Endothelial cell of umbilical vein (primary cell): ENCODE measurements at regions of chr12 and their contacts with region 1.

Region 1: DNA sequence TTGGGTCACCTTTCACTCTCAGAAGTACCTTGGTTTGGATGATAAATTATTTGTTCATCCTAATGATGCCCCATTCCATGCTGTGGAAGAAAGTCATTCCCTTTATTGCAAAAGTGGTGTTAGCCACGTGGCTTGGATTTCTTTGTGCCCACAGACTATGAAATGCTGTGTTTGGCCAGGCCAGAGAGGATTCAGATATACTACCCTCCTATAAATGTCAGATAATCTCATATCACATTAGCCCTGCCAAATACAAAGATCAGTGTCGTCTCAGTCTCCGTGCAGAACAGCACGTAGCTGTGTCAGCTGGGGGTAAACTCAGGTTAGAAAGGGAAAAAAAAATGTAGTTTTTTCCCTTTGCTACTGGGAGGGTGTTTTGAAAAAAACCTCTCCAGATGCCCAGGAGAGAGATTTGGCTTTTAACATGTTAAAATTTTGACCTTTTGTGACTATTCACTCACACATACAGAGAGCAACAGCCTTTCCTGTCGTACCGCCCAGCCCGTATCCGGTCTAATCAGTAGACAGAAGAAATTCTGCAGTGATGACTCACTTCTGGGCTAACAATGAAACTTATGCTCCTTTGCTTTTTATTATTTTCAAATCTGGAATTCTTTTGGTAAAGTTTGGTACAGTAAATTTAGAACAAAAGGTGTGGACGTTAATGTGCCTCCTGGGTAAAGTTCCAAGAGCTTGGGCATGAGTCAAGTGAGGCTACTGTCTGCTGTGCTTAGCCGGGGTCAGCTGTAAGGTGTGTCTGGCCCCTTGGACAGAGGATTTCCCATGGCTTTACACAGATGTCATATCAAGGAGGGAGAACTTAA is 8.5 kb upstream of the PTPRB start:
- DNase-seq: peak; percentile 95
- H3K4me3 ChIP-seq: no peak overlapping the region
- H3K27ac ChIP-seq: peak overlapping the region; percentile 99
- H3K4me1 ChIP-seq: peaks cover 54% of the 10 kb centered on the region
- H3K27me3 ChIP-seq: no peaks in the 10 kb centered on the region
- CTCF ChIP-seq: no peak
- POLR2A ChIP-seq: peak; percentile 70

Region 2: GRCh38 chr12:70590051-70590450 is 55.7 kb before region 1 on chr12:
- CTCF ChIA-PET with region 1: no interaction called
- POLR2A ChIA-PET with region 1: no interaction called
- dilution Hi-C with region 1: no loop called
- intact Hi-C with region 1: loop called (anchors 1 kb)
- DNase-seq: peak; percentile 80
- H3K4me3 ChIP-seq: no peak overlapping the region
- H3K27ac ChIP-seq: no peak overlapping the region
- H3K4me1 ChIP-seq: no peaks in the 10 kb centered on the region
- H3K27me3 ChIP-seq: no peaks in the 10 kb centered on the region
- CTCF ChIP-seq: peak; percentile 82 to 88
- POLR2A ChIP-seq: no peak

Region 3: GRCh38 chr12:70598467-70599193 is 47.1 kb before region 1 on chr12:
- CTCF ChIA-PET with region 1: interaction called, 3 read pairs
- POLR2A ChIA-PET with region 1: no interaction called
- dilution Hi-C with region 1: no loop called
- intact Hi-C with region 1: loop called (anchors 1 kb)
- DNase-seq: peak; percentile 96
- H3K4me3 ChIP-seq: peak overlapping the region in 1 of 3 experiments; percentile 40
- H3K27ac ChIP-seq: peak overlapping the region; percentile 92
- H3K4me1 ChIP-seq: peaks cover 48% of the 10 kb centered on the region
- H3K27me3 ChIP-seq: no peaks in the 10 kb centered on the region
- CTCF ChIP-seq: no peak
- POLR2A ChIP-seq: peak; percentile 32

Region 4: DNA sequence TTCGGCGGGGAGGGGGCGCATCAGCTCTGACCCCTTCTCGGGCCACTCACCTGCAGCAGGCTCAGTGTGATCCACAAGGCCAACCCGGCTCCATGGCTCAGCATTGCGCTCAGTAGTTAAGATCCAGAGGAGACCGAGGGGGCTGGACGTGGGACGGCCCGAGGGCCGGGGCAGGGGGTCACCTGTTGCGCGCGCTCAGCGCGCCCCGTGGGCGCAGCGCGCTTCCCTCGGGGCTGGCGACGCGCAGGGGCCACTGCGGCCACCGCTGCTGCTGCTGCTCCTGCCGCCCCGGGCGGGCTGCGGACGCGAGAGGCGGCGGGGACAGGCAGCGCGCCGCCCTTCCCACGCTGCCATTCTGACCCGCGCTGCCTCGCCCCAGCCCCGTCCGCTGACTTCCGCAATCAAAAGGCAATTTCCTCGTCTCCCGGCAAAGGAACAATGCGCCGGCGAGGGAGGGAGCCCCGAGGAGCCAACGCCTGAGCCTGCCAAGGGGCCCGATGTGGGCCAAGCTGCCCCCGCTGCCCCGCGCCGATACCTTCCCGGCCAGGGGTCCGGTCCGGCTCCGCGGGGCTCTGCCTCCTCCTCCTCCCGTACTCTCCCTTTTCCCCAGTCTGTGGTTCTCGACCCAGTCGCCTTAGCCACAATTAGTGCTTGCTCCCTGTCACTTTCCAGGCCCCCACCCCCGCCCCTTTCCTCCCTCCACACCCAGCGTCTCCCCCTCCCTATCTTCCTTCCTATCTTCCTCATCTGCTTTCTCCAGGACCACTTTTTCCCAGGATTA is 35.8 kb before region 1 on chr12:
- CTCF ChIA-PET with region 1: no interaction called
- POLR2A ChIA-PET with region 1: no interaction called
- dilution Hi-C with region 1: no loop called
- intact Hi-C with region 1: loop called (anchors 1 kb)
- DNase-seq: peak; percentile 79
- H3K4me3 ChIP-seq: peak overlapping the region; percentile 33 to 49 (median 37)
- H3K27ac ChIP-seq: peak overlapping the region; percentile 77
- H3K4me1 ChIP-seq: peaks cover 67% of the 10 kb centered on the region
- H3K27me3 ChIP-seq: no peaks in the 10 kb centered on the region
- CTCF ChIP-seq: no peak
- POLR2A ChIP-seq: peak; percentile 45

Region 5: GRCh38 chr12:70660620-70661219 is 15.0 kb after region 1 on chr12:
- CTCF ChIA-PET with region 1: interaction called, 5 read pairs
- POLR2A ChIA-PET with region 1: no interaction called
- dilution Hi-C with region 1: no loop called
- intact Hi-C with region 1: loop called (anchors 1 kb)
- DNase-seq: peak; percentile 57
- H3K4me3 ChIP-seq: no peak overlapping the region
- H3K27ac ChIP-seq: peak overlapping the region; percentile 97
- H3K4me1 ChIP-seq: peaks cover 40% of the 10 kb centered on the region
- H3K27me3 ChIP-seq: no peaks in the 10 kb centered on the region
- CTCF ChIP-seq: no peak
- POLR2A ChIP-seq: no peak